ENCODE measurements at regions of chr7 and their contacts with region 1.

Region 1: DNA sequence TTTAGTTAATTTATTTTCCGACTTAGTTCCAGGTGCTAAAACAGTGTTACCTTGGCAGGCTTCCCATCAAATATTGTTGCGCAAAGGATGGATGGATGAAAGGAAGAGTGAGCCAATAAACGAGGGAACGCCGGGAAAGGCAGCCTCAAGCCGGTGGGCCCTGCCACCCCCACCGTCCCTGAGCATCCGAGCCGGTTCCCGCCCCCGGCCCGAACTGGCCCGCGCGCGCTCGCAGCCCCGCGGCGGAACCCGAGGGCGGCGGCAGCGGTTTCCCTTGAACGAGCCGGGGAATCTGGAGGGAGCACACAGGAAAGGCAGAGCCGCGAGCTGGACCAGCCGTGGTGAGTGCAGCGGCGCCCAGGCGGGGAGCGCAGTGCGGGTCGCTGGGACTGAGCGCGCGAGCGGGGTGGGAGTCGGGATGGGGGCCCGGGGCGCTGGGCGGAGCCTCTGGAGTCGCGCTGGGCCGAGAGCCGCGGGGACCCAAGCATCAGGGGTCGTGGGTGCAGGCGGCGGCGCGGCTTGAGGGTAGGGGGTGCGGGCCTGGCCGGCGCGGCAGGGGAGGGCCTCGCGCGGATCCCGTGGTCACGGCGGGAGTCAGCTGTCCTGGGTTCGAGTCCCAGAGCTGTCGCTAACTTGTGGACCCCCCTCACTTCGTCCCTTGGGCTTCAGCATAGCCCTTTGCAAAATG is at the start of gene AGK:
- DNase-seq: peak; percentile 77 to 86 (median 79)
- ATAC-seq: peak; percentile 73 to 96 (median 95)
- H3K4me3 ChIP-seq: peak within 1 kb of the TSS; percentile 47 to 99 (median 94)
- H3K27ac ChIP-seq: peak within 1 kb of the TSS; percentile 30 to 87 (median 76)
- H3K4me1 ChIP-seq: peaks cover 0 to 27% (median 14%) of the 10 kb centered on the region in 12 donors
- H3K27me3 ChIP-seq: no peaks in the 10 kb centered on the region
- CTCF ChIP-seq: no peak
- POLR2A ChIP-seq: peak in 1 of 2 donors; percentile 42
- total RNA-seq, gene AGK: 30.6 to 49.8 (median 41.3) TPM

Region 2: GRCh38 chr7:141641876-141642275 is 90.6 kb after region 1 on chr7:
- intact Hi-C with region 1: loop called in 6 of 10 experiments (anchors 5 to 10 kb)
- DNase-seq: no peak
- ATAC-seq: peak in 2 of 4 donors; percentile 62 to 64
- H3K4me3 ChIP-seq: no peak overlapping the region
- H3K27ac ChIP-seq: no peak overlapping the region
- H3K4me1 ChIP-seq: peaks cover 0 to 11% (median 0%) of the 10 kb centered on the region in 12 donors
- H3K27me3 ChIP-seq: no peaks in the 10 kb centered on the region
- CTCF ChIP-seq: peak in 6 of 12 donors; percentile 10 to 43 (median 18)
- POLR2A ChIP-seq: no peak

Region 3: DNA sequence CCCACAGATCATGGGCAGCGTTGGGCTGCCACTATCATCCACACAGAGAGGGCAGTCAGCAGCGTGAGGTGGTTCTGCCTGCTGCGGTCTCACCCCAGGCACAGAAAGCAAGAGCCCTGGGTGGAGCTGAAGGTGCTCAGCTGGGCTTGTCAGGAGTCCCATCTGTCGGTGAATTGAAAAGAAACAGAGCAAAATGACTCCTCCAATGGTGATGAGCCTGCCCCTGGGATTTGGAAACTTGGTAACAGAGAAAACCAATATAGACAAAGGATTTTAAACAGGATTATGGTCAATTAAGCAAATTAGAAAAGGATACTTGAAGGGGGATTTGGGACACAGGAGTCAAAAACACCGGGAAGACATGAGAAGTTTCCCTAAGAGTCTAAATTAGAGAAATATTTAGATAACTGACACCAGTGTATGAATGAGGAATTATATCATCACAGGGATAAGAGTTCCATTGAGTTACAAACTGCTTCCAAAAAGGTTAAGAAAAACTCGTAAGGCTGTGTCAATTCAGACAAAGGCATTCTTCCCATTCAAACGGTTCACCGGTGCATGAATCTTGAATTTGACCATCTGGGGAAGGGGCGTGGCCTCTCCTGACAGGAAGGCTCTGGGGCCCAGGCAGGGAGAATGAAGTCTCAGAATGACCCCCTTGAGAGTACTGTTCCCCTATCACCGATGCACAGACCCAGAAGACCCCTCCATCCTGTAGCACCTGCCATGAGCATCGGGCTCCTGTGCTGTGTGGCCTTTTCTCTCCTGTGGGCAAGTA is 776.6 kb after region 1 on chr7:
- intact Hi-C with region 1: no loop called
- DNase-seq: no peak
- ATAC-seq: no peak
- H3K4me3 ChIP-seq: no peak overlapping the region
- H3K27ac ChIP-seq: no peak overlapping the region
- H3K4me1 ChIP-seq: no peaks in the 10 kb centered on the region
- H3K27me3 ChIP-seq: peaks cover 0 to 29% (median 0%) of the 10 kb centered on the region in 9 donors
- CTCF ChIP-seq: no peak
- POLR2A ChIP-seq: no peak